Activated T-helper 1 cell treated with anti-CD3 and anti-CD28 coated beads, Interleukin-12 subunit alpha, Interleukin-12 subunit beta, Interleukin-2, Interleukin-4 antibody, amounts not matched to agents 30 ng/mL and 10 ng/mL and 1 ng/mL, durations not matched to agents 14 hours and 24 hours and 36 hours (primary cell): ENCODE measurements at regions of chr5 and their contacts with region 1.

Region 1: GRCh38 chr5:56095579-56096102 is 100.9 kb upstream of the IL6ST start:
- DNase-seq: no peak
- H3K4me3 Mint-ChIP-seq: peak overlapping the region; percentile 50
- H3K27ac Mint-ChIP-seq: peak overlapping the region; percentile 87
- H3K4me1 Mint-ChIP-seq: peaks cover 83% of the 10 kb centered on the region
- H3K27me3 Mint-ChIP-seq: no peaks in the 10 kb centered on the region

Region 2: DNA sequence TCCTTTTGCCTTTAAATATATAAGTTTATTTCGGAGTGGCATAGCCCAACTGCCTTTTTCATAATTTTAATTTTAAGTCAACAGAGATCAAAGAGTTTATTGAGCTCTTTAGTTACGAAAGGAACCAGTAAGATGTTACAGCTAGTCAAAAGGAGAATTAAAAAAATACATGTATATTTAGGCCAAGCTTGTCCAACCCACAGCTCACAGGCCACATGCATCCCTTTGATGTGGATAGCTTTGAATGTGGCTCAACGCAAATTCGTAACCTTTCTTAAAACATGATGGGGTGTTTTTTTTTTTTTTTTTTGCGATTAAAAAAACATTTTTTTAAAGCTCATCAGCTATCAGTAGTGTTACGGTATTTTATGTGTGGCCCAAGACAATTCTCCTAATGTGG is 294.7 kb before region 1 on chr5:
- intact Hi-C with region 1: no loop called
- DNase-seq: no peak
- H3K4me3 Mint-ChIP-seq: no peak overlapping the region
- H3K27ac Mint-ChIP-seq: no peak overlapping the region
- H3K4me1 Mint-ChIP-seq: no peaks in the 10 kb centered on the region
- H3K27me3 Mint-ChIP-seq: peaks cover under 1% of the 10 kb centered on the region

Region 3: DNA sequence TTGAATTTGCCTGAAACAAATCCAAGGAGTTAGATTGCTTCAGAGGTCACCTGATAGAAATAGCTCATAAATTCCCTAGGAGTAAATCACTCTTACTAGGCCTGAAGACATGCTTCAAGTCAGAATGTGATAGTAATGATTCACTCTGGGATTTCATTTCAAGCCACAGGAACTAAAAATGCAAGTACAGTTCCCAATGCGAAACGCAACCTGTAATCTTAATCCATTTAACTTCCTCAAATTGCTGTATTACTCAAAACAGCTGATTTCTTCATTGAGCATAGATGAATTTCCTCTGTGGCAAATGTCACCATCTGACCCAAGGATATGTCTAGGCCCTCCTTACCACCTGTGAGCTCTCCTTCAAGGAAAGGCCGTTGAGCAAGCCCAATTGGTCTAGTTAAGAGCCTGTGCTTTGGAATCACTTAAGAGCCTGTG is 68.8 kb before region 1 on chr5:
- intact Hi-C with region 1: loop called (anchors 2 kb)
- DNase-seq: no peak
- H3K4me3 Mint-ChIP-seq: no peak overlapping the region
- H3K27ac Mint-ChIP-seq: no peak overlapping the region
- H3K4me1 Mint-ChIP-seq: peaks cover 23% of the 10 kb centered on the region
- H3K27me3 Mint-ChIP-seq: peaks cover 32% of the 10 kb centered on the region

Region 4: GRCh38 chr5:56056875-56057274 is 38.8 kb before region 1 on chr5:
- intact Hi-C with region 1: loop called (anchors 2 kb)
- DNase-seq: no peak
- H3K4me3 Mint-ChIP-seq: no peak overlapping the region
- H3K27ac Mint-ChIP-seq: no peak overlapping the region
- H3K4me1 Mint-ChIP-seq: peaks cover 52% of the 10 kb centered on the region
- H3K27me3 Mint-ChIP-seq: peaks cover 5% of the 10 kb centered on the region

Region 5: GRCh38 chr5:56080375-56081052 is 15.1 kb before region 1 on chr5:
- intact Hi-C with region 1: loop called (anchors 1 kb)
- DNase-seq: no peak
- H3K4me3 Mint-ChIP-seq: peak overlapping the region; percentile 38
- H3K27ac Mint-ChIP-seq: peak overlapping the region; percentile 37
- H3K4me1 Mint-ChIP-seq: peaks cover 45% of the 10 kb centered on the region
- H3K27me3 Mint-ChIP-seq: no peaks in the 10 kb centered on the region

Region 6: GRCh38 chr5:56112526-56113121 is 17.0 kb after region 1 on chr5:
- intact Hi-C with region 1: loop called (anchors 1 kb)
- DNase-seq: no peak
- H3K4me3 Mint-ChIP-seq: no peak overlapping the region
- H3K27ac Mint-ChIP-seq: no peak overlapping the region
- H3K4me1 Mint-ChIP-seq: peaks cover 16% of the 10 kb centered on the region
- H3K27me3 Mint-ChIP-seq: no peaks in the 10 kb centered on the region

Region 7: GRCh38 chr5:56126487-56127179 is 31.0 kb after region 1 on chr5:
- intact Hi-C with region 1: loop called (anchors 2 kb)
- DNase-seq: no peak
- H3K4me3 Mint-ChIP-seq: peak overlapping the region; percentile 76
- H3K27ac Mint-ChIP-seq: peak overlapping the region; percentile 94
- H3K4me1 Mint-ChIP-seq: peaks cover 40% of the 10 kb centered on the region
- H3K27me3 Mint-ChIP-seq: no peaks in the 10 kb centered on the region

Region 8: GRCh38 chr5:56200856-56201666 is 105.4 kb after region 1 on chr5:
- intact Hi-C with region 1: loop called (anchors 1 kb)
- DNase-seq: peak; percentile 48
- H3K4me3 Mint-ChIP-seq: no peak overlapping the region
- H3K27ac Mint-ChIP-seq: no peak overlapping the region
- H3K4me1 Mint-ChIP-seq: peaks cover 27% of the 10 kb centered on the region
- H3K27me3 Mint-ChIP-seq: no peaks in the 10 kb centered on the region

Region 9: DNA sequence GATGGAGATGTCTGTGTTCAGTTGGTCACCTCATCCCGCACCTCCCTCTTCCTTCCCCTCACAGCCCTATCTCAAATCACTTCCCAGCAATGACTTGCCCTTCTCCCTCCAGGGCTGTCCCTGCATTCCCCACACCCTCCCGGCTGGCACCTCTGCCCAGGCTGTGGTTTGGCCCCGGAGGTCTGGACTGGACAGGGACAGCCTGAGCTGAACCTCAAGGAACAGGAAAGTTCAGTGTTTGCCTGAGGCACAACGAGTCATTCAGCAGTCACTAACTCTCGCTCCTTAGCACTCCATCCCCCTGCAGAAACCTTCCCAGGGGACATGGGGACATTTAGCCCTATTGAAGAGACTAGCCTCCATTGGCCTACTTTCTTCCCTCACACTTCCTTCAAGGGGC is 661.4 kb after region 1 on chr5:
- intact Hi-C with region 1: no loop called
- DNase-seq: no peak
- H3K4me3 Mint-ChIP-seq: no peak overlapping the region
- H3K27ac Mint-ChIP-seq: no peak overlapping the region
- H3K4me1 Mint-ChIP-seq: peaks cover 5% of the 10 kb centered on the region
- H3K27me3 Mint-ChIP-seq: peaks cover 11% of the 10 kb centered on the region